AG04449 (cell line): ENCODE measurements at regions of chr19 and their contacts with region 1.

Region 1: DNA sequence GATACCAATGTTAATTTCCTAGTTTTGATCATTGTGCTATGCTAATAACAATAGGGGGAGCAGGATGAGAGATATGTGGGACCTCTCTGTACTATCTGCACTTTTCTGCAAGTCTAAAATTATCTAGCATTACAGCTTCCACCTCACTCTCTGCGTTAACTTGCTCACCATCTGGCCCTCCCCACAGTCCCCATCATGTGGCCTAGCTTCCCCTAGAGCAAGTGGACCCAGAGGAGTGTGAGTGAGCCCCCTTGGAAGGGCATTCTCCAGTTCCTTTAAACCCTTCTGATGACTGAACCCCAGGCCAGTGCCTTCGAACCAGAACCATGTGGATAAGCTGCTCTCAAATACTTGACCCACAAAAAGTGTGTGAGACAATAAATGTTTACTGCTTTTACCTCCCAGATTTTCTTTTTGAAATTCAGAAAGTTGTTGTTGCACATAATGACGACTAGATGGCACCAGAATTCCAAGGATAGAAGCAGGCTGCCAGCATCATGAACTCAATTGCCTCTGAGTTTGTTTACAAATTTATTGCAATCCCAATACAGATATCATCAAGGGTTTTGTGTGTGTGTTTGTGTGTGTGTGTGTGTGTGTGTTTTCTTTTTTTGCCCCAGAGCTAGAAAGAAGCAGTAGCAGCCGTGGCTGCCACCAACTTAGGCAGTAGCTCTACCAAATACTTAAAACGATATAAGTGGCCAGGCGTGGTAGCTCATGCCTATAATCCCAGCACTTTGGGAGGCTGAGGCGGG is 49.0 kb upstream of the ZNF780A start:
- DNase-seq: no peak
- H3K4me3 ChIP-seq: no peak overlapping the region
- CTCF ChIP-seq: peak; percentile 52

Region 2: GRCh38 chr19:40128991-40129390 is 10.7 kb before region 1 on chr19:
- CTCF ChIA-PET with region 1: interaction called, 22 read pairs
- POLR2A ChIA-PET with region 1: no interaction called
- DNase-seq: no peak
- H3K4me3 ChIP-seq: no peak overlapping the region
- CTCF ChIP-seq: no peak

Region 3: DNA sequence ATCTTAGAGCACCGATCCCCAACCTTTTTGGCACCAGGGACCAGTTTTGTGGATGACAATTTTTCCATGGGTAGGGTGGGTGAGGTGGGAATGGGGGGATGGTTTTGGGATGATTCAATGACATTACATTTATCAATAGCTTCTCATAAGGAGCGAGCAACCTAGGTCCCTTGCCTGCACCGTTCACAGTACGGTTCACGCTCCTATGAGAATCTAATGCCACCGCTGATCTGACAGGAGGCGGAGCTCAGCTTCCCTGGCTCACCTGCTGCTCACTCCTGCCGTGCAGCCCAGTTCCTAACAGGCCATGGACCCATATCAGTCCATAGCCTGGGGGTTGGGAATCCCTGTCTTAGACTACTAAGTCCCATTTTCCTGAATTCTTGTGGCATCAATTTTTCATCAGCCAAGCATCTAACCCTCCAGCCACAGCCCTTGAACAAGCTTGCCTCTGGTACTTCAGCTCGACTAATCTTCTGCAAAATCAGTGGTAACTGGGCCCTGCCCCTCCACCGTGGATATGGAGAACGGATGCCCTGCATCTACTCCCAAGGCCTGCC is 14.5 kb after region 1 on chr19:
- CTCF ChIA-PET with region 1: interaction called, 14 read pairs
- POLR2A ChIA-PET with region 1: no interaction called
- DNase-seq: no peak
- H3K4me3 ChIP-seq: no peak overlapping the region
- CTCF ChIP-seq: no peak

Region 4: GRCh38 chr19:40165362-40165937 is 25.7 kb after region 1 on chr19:
- CTCF ChIA-PET with region 1: interaction called, 11 read pairs
- POLR2A ChIA-PET with region 1: no interaction called
- DNase-seq: no peak
- H3K4me3 ChIP-seq: no peak overlapping the region
- CTCF ChIP-seq: peak; percentile 78

Region 5: DNA sequence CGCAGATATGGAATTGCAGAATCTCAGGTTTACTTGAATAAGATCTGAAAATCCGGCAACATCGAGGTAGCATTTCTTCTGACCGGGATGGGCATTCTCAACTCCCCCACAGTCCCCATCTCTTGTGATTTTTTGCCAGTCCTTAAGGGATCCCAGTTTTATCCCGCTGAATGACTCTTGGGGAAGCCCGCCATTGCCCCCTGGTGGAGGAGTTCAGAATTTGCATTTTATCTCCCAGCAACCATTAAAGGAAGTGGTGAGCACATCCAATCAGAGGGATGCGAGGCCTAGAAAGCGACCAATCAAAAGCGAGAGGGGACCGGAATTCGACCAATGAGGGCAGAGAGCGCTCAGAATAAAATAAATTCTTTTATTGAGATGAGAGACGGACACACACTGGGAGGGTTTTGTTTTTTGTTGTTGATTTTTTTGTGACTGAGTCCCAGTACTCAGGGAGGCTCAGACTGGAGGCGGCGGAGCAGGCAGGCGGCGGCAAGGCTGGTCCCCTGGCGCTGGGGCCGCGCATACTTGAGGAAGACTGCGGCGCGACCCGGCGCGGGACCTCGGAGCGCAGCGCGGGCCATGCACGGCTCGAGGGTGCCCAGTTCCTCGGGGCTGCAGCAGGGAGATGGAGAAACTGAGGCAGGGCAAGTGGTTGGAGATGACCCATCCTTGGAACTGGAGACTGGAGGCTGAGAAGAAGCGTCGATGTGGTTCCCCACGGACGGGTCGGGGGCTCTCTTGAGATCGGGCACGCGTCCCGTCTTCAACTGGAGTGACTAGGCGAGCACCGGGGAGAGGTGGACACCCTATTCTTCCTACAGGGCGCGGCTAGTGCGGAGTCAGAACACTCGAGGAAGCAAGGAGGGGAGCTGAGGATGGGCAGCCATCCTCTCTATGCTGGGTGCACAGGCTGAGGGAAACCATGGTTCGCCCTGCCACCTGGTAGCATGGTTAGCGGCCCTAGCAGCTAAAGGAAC is 82.4 kb after region 1 on chr19:
- CTCF ChIA-PET with region 1: interaction called, 44 read pairs
- POLR2A ChIA-PET with region 1: no interaction called
- DNase-seq: peak; percentile 53
- H3K4me3 ChIP-seq: no peak overlapping the region
- CTCF ChIP-seq: peak; percentile 58

Region 6: DNA sequence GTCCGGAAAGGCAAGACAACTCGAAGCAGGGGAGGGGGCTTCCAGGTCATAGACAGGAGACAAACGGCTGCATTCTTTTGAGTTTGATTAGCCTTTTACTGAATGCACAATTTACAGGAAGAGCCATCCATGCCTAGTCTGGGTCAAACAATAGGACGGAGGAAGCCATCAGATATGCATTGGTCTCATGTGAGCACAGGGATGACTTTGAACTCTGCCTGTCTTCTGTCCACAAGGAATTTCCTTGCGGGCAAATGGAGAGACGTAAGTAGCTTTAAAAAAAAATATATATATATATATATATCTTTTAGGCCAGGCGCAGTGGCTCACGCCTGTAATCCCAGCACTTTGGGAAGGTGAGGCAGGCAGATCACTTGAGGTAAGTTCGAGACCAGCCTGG is 88.7 kb after region 1 on chr19:
- CTCF ChIA-PET with region 1: interaction called, 37 read pairs
- POLR2A ChIA-PET with region 1: no interaction called
- DNase-seq: no peak
- H3K4me3 ChIP-seq: no peak overlapping the region
- CTCF ChIP-seq: no peak

Region 7: GRCh38 chr19:40286235-40286970 is 146.7 kb after region 1 on chr19:
- CTCF ChIA-PET with region 1: no interaction called
- POLR2A ChIA-PET with region 1: no interaction called
- DNase-seq: no peak
- H3K4me3 ChIP-seq: no peak overlapping the region; the same call in 1 of the 2 replicates
- CTCF ChIP-seq: no peak

Region 8: GRCh38 chr19:40640744-40641143 is 501.0 kb after region 1 on chr19:
- CTCF ChIA-PET with region 1: interaction called, 16 read pairs
- POLR2A ChIA-PET with region 1: no interaction called
- DNase-seq: no peak
- H3K4me3 ChIP-seq: no peak overlapping the region
- CTCF ChIP-seq: no peak